ENCODE measurements at regions of chr5 and their contacts with region 1.

Region 1: GRCh38 chr5:95669540-95669939 is 13.3 kb downstream of the SPATA9 start:
- DNase-seq: peak; percentile 86 to 89
- ATAC-seq: peak; percentile 99
- H3K4me3 ChIP-seq: no peak overlapping the region
- H3K27ac ChIP-seq: peak overlapping the region; percentile 68 to 86 (median 82)
- H3K4me1 ChIP-seq: peaks cover 14% of the 10 kb centered on the region in 2 donors
- H3K27me3 ChIP-seq: no peaks in the 10 kb centered on the region
- CTCF ChIP-seq: no peak
- POLR2A ChIP-seq: peak in 1 of 2 donors; percentile 50

Region 2: GRCh38 chr5:95712347-95712958 is 42.9 kb after region 1 on chr5:
- in situ Hi-C with region 1: no loop called
- intact Hi-C with region 1: loop called (anchors 5 kb)
- DNase-seq: peak in 1 of 2 donors; percentile 50
- ATAC-seq: peak; percentile 55 to 79
- H3K4me3 ChIP-seq: no peak overlapping the region
- H3K27ac ChIP-seq: no peak overlapping the region
- H3K4me1 ChIP-seq: peaks cover 6 to 13% of the 10 kb centered on the region in 2 donors
- H3K27me3 ChIP-seq: no peaks in the 10 kb centered on the region
- CTCF ChIP-seq: no peak
- POLR2A ChIP-seq: no peak

Region 3: GRCh38 chr5:95730730-95731570 is 61.4 kb after region 1 on chr5 and contains the start of gene RHOBTB3:
- in situ Hi-C with region 1: loop called (anchors 5 to 10 kb)
- intact Hi-C with region 1: loop called (anchors 1 kb)
- DNase-seq: peak; percentile 89 to 91
- ATAC-seq: peak; percentile 69 to 72
- H3K4me3 ChIP-seq: peak within 1 kb of the TSS; percentile 80 to 87 (median 85)
- H3K27ac ChIP-seq: peak within 1 kb of the TSS; percentile 91 to 96 (median 94)
- H3K4me1 ChIP-seq: peaks cover 39 to 48% of the 10 kb centered on the region in 2 donors
- H3K27me3 ChIP-seq: no peaks in the 10 kb centered on the region
- CTCF ChIP-seq: peak in 1 of 5 experiments; percentile 16
- POLR2A ChIP-seq: peak; percentile 88 to 92
- total RNA-seq, gene RHOBTB3: 40.1 to 134 (median 86.9) TPM

Region 4: GRCh38 chr5:95773335-95774059 is 104.0 kb after region 1 on chr5:
- in situ Hi-C with region 1: loop called in 1 of 4 experiments (anchors 10 kb)
- intact Hi-C with region 1: loop called (anchors 5 kb)
- DNase-seq: no peak
- ATAC-seq: no peak
- H3K4me3 ChIP-seq: no peak overlapping the region
- H3K27ac ChIP-seq: peak overlapping the region in 3 of 4 donors; percentile 2 to 33 (median 4)
- H3K4me1 ChIP-seq: peaks cover 9 to 41% of the 10 kb centered on the region in 2 donors
- H3K27me3 ChIP-seq: no peaks in the 10 kb centered on the region
- CTCF ChIP-seq: no peak
- POLR2A ChIP-seq: no peak

Region 5: GRCh38 chr5:95803284-95804148 is 134.0 kb after region 1 on chr5:
- in situ Hi-C with region 1: no loop called
- intact Hi-C with region 1: no loop called
- DNase-seq: no peak
- ATAC-seq: peak; percentile 94 to 96
- H3K4me3 ChIP-seq: no peak overlapping the region
- H3K27ac ChIP-seq: peak overlapping the region; percentile 53 to 76 (median 61)
- H3K4me1 ChIP-seq: peaks cover 18 to 35% of the 10 kb centered on the region in 2 donors
- H3K27me3 ChIP-seq: no peaks in the 10 kb centered on the region
- CTCF ChIP-seq: no peak
- POLR2A ChIP-seq: no peak

Measured in gastrocnemius medialis (tissue), 4 donors.